Activated CD4-positive, alpha-beta memory T cell treated with anti-CD3 and anti-CD28 coated beads for 36 hours (primary cell): ENCODE measurements at regions of chrX and their contacts with region 1.

Region 1: GRCh38 chrX:106894392-106894909 is 8.7 kb downstream of the RIPPLY1 start:
- DNase-seq: peak; percentile 54
- H3K4me3 Mint-ChIP-seq: no peak overlapping the region
- H3K27ac Mint-ChIP-seq: no peak overlapping the region
- H3K4me1 Mint-ChIP-seq: no peaks in the 10 kb centered on the region
- H3K27me3 Mint-ChIP-seq: no peaks in the 10 kb centered on the region

Region 2: GRCh38 chrX:106906361-106906760 is 11.9 kb after region 1 on chrX:
- CTCF ChIA-PET with region 1: interaction called, 14 read pairs
- POLR2A ChIA-PET with region 1: no interaction called
- intact Hi-C with region 1: no loop called
- DNase-seq: no peak
- H3K4me3 Mint-ChIP-seq: no peak overlapping the region
- H3K27ac Mint-ChIP-seq: no peak overlapping the region
- H3K4me1 Mint-ChIP-seq: no peaks in the 10 kb centered on the region
- H3K27me3 Mint-ChIP-seq: no peaks in the 10 kb centered on the region

Region 3: GRCh38 chrX:106952988-106953387 is 58.5 kb after region 1 on chrX:
- CTCF ChIA-PET with region 1: interaction called, 4 read pairs
- POLR2A ChIA-PET with region 1: no interaction called
- intact Hi-C with region 1: loop called (anchors 2 kb)
- DNase-seq: no peak
- H3K4me3 Mint-ChIP-seq: no peak overlapping the region
- H3K27ac Mint-ChIP-seq: no peak overlapping the region
- H3K4me1 Mint-ChIP-seq: no peaks in the 10 kb centered on the region
- H3K27me3 Mint-ChIP-seq: no peaks in the 10 kb centered on the region

Region 4: DNA sequence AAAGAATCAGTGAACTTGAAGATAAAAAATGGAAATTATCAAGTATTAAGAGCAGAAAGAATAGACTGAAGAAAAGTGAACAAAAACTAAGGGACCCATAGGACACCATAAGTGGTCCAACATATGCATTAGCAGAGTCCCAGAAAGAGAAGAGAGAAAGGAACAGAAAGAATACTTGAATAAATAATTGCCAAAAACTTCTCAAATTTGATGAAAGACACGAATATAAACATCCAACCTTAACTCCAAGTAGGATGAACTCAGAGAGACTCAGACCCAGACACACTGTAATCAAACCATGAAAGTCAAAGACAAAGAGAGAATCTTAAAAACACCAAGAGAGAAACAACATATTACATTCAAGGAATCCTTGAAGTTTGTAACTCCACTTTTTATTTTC is 69.8 kb after region 1 on chrX:
- CTCF ChIA-PET with region 1: no interaction called
- POLR2A ChIA-PET with region 1: no interaction called
- intact Hi-C with region 1: no loop called
- DNase-seq: no peak
- H3K4me3 Mint-ChIP-seq: no peak overlapping the region
- H3K27ac Mint-ChIP-seq: no peak overlapping the region
- H3K4me1 Mint-ChIP-seq: no peaks in the 10 kb centered on the region
- H3K27me3 Mint-ChIP-seq: no peaks in the 10 kb centered on the region

Region 5: DNA sequence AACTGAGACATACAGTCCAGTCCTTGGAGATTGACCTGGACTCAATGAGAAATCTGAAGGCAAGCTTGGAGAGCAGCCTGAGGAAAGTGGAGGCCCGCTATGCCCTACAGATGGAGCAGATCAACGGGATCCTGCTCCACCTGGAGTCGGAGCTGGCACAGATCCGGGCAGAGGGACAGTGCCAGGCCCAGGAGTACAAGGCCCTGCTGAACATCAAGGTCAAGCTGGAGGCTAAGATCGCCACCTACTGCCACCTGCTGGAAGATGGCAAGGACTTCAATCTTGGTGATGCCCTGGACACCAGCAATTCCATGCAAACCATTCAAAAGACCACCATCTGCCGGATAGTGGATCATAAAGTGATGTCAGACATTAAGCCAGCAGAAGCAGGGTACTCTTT is 534.6 kb after region 1 on chrX:
- CTCF ChIA-PET with region 1: interaction called, 12 read pairs
- POLR2A ChIA-PET with region 1: no interaction called
- intact Hi-C with region 1: no loop called
- DNase-seq: peak; percentile 50
- H3K4me3 Mint-ChIP-seq: no peak overlapping the region
- H3K27ac Mint-ChIP-seq: no peak overlapping the region
- H3K4me1 Mint-ChIP-seq: no peaks in the 10 kb centered on the region
- H3K27me3 Mint-ChIP-seq: no peaks in the 10 kb centered on the region